ENCODE measurements at regions of chr11 and their contacts with region 1.

Region 1: GRCh38 chr11:59802639-59803176 is 7.9 kb downstream of the MRPL16 start:
- DNase-seq: no peak
- ATAC-seq: peak; percentile 84

Region 2: DNA sequence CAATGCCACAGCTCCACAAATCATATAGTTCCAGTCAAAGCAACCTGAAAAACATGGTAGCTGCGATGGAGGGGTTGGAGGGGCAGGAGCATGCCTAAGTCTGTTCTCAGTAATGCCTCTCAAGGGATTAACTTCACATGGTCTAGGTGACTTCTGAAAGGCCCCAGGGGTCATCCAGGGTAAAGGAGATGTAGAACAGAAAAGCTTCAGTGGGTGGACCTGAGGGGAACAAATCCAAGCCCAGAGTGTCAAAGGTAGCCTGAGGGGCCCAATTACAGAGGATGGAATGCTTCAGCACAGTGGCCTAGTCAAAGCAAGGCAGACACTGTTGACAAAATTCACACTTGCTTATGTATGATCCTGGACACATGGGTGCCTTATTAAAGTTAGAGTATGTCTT is 268.0 kb before region 1 on chr11:
- intact Hi-C with region 1: loop called (anchors 10 kb)
- DNase-seq: no peak
- ATAC-seq: no peak

Region 3: DNA sequence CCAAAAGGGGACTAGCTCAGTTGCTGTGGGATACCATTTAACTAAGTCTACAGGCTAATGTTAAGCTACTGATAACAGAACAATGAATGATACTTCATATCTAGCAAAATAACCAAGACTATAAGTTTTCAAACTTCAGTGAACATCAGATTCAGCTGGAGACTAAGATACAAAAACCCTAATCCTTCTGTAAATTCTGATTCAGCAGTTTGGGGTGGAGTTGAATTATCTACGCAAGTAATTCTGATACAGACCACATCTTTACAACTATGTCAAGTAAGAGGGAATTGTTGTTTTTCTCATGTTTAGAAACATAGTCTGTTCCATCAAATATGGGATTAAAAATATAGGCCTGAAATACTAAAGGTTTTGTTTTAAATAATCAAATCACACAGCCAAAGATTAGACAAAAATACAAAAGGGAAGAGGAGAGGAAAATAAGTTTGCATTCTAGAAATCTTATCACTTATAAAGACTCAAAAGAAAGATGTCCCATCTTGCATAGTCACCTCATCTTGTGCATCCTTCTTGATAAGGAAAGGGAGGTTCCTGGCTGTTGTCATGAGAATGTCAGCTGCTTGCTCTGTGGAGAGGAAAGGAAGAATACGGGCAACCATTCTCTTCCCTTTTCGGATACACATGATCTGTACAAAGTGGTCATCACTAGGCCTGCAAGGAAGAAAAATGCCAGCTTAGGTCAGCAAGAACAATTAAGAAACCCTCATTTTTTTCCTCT is 155.3 kb before region 1 on chr11:
- intact Hi-C with region 1: no loop called
- DNase-seq: no peak
- ATAC-seq: no peak

Region 4: GRCh38 chr11:59689015-59689414 is 113.7 kb before region 1 on chr11:
- intact Hi-C with region 1: no loop called
- DNase-seq: no peak
- ATAC-seq: no peak

Region 5: GRCh38 chr11:59753650-59754493 is 48.8 kb before region 1 on chr11:
- intact Hi-C with region 1: loop called (anchors 2 kb)
- DNase-seq: peak; percentile 90
- ATAC-seq: peak; percentile 85

Region 6: GRCh38 chr11:59878482-59878881 is 75.8 kb after region 1 on chr11 and contains the start of gene OOSP3:
- intact Hi-C with region 1: no loop called
- DNase-seq: no peak
- ATAC-seq: no peak
- total RNA-seq, gene OOSP3: not detected